Mammary epithelial cell (primary cell): ENCODE measurements at regions of chr3 and their contacts with region 1.

Region 1: DNA sequence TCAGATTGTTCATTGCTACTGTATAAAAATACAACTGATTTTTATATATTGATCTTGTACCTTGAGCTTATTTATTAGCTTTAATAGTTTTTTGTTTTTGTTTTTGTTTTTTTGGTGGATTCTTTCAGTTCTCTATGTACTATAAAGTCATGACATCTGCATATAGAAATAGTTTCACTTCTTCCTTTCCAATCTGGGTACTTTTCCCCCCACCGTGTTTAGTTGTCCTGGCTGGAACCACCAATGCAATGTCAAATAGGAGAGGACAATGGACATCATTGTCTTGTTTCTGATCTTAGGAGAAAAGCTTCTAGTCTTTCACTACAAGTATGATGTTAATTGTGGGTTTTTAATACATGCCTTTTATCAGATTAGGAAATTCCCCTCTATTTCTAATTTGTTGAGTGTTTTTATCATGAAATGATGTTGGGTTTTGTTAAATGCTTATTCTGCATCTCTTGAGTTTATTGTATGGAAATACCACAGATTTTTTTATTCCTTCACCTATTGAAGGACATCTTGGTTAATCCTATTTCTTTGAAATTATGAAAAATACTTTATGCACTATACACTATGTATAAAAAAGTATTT is 2.8 kb upstream of the XCR1 start:
- DNase-seq: no peak
- H3K4me3 ChIP-seq: no peak overlapping the region
- H3K27ac ChIP-seq: no peak overlapping the region
- H3K4me1 ChIP-seq: no peaks in the 10 kb centered on the region
- H3K27me3 ChIP-seq: no peaks in the 10 kb centered on the region
- CTCF ChIP-seq: no peak

Region 2: GRCh38 chr3:45981321-45982074 is 48.5 kb before region 1 on chr3:
- CTCF ChIA-PET with region 1: no interaction called
- dilution Hi-C with region 1: loop called (anchors 5 kb)
- in situ Hi-C with region 1: no loop called
- intact Hi-C with region 1: no loop called
- DNase-seq: no peak
- H3K4me3 ChIP-seq: no peak overlapping the region
- H3K27ac ChIP-seq: no peak overlapping the region
- H3K4me1 ChIP-seq: peaks cover under 1% of the 10 kb centered on the region
- H3K27me3 ChIP-seq: no peaks in the 10 kb centered on the region
- CTCF ChIP-seq: no peak